ENCODE measurements at regions of chr11 and their contacts with region 1.

Region 1: DNA sequence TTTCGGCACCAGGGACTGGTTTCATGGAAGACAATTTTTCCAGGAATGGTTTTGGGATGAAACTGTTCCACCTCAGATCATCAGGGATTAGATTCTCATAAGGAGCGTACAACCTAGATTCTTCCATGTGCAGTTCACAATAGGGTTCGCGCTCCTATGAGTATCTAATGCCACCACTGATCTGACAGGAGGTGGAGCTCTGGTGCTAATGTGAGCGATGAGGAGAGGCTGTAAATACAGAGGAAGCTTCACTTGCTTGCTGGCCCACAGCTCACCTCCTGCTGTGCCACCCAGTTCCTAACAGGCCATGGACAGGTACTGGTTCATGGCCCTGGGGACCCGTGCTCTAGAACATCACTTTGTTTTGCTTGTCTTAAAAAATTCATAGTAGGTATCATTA is 41.8 kb upstream of the AMPD3 start:
- DNase-seq: peak in 7 of 10 donors; percentile 34 to 68 (median 58)
- H3K4me3 ChIP-seq: no peak overlapping the region
- H3K27ac ChIP-seq: peak overlapping the region in 37 of 59 donors; percentile 3 to 88 (median 66)
- H3K27me3 ChIP-seq: no peaks in the 10 kb centered on the region
- CTCF ChIP-seq: peak in 55 of 56 donors; percentile 18 to 79 (median 55)

Region 2: DNA sequence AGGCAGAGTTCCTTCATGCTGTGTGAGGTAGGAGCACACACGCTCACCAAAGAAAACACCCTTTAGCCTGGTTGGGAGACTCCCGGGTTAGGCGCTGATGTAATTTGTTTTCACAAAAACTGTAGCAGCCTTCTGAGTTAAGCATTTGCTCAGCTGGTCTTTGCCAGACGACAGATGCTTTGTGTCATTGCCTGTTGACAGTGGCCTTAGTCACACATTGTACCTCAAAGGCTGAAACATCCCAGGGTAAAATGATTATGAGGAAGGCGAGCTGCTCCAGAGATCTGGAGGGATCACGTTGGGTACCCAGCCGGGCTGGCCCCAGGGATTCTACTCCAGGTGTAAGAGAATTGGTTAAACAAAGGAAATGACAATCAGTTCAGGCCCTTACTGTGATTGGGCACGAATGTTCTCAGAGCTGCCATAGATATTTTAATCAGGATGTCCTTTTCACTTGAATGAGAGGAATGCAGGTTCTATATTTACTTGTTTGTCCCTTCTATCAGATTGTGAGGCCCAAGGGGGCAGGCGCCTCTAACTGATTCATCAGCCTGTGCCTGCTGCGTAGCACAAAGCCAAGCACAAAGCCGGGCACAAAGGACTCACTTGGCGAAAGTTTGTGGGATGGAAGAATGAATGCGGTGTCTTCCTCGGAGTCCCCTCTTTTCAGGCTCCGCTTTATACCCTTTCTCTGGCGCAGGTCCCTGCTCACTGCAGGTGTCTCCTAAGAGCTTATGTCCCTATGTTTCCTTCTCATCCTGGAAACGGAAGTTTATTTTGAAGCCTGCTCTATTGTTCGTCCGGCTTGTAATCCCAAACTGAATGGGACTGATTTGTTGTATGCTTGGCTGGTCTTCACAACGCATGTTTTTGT is 61.3 kb before region 1 on chr11:
- intact Hi-C with region 1: no loop called
- DNase-seq: peak in 1 of 10 donors; percentile 35
- H3K4me3 ChIP-seq: no peak overlapping the region
- H3K27ac ChIP-seq: peak overlapping the region in 8 of 59 donors; percentile 5 to 63 (median 32)
- H3K27me3 ChIP-seq: peaks cover 0 to 1% (median 0%) of the 10 kb centered on the region in 45 donors
- CTCF ChIP-seq: no peak

Region 3: GRCh38 chr11:10436224-10436623 is 23.0 kb after region 1 on chr11:
- intact Hi-C with region 1: no loop called
- DNase-seq: no peak
- H3K4me3 ChIP-seq: no peak overlapping the region
- H3K27ac ChIP-seq: no peak overlapping the region
- H3K27me3 ChIP-seq: no peaks in the 10 kb centered on the region
- CTCF ChIP-seq: no peak

Region 4: GRCh38 chr11:10450464-10451425 is 37.5 kb after region 1 on chr11:
- intact Hi-C with region 1: loop called in 1 of 2 experiments (anchors 5 kb)
- DNase-seq: peak in 5 of 10 donors; percentile 25 to 68 (median 49)
- H3K4me3 ChIP-seq: peak overlapping the region; percentile 47 to 88 (median 70)
- H3K27ac ChIP-seq: peak overlapping the region; percentile 77 to 100 (median 95)
- H3K27me3 ChIP-seq: no peaks in the 10 kb centered on the region
- CTCF ChIP-seq: peak in 36 of 56 donors; percentile 4 to 56 (median 29)

Region 5: GRCh38 chr11:10502770-10503169 is 89.5 kb after region 1 on chr11:
- intact Hi-C with region 1: loop called in 1 of 2 experiments (anchors 5 kb)
- DNase-seq: no peak
- H3K4me3 ChIP-seq: no peak overlapping the region
- H3K27ac ChIP-seq: peak overlapping the region in 42 of 59 donors; percentile 0 to 77 (median 45)
- H3K27me3 ChIP-seq: no peaks in the 10 kb centered on the region
- CTCF ChIP-seq: no peak

Region 6: GRCh38 chr11:10540923-10541560 is 127.8 kb after region 1 on chr11 and contains the start of gene RNF141:
- intact Hi-C with region 1: loop called (anchors 5 kb)
- DNase-seq: peak; percentile 90 to 97 (median 94)
- H3K4me3 ChIP-seq: peak within 1 kb of the TSS; percentile 63 to 99 (median 91)
- H3K27ac ChIP-seq: peak within 1 kb of the TSS; percentile 51 to 96 (median 91)
- H3K27me3 ChIP-seq: no peaks in the 10 kb centered on the region
- CTCF ChIP-seq: peak; percentile 64 to 95 (median 89)
- total RNA-seq, gene RNF141: 47.2 to 142 (median 77.9) TPM

Region 7: DNA sequence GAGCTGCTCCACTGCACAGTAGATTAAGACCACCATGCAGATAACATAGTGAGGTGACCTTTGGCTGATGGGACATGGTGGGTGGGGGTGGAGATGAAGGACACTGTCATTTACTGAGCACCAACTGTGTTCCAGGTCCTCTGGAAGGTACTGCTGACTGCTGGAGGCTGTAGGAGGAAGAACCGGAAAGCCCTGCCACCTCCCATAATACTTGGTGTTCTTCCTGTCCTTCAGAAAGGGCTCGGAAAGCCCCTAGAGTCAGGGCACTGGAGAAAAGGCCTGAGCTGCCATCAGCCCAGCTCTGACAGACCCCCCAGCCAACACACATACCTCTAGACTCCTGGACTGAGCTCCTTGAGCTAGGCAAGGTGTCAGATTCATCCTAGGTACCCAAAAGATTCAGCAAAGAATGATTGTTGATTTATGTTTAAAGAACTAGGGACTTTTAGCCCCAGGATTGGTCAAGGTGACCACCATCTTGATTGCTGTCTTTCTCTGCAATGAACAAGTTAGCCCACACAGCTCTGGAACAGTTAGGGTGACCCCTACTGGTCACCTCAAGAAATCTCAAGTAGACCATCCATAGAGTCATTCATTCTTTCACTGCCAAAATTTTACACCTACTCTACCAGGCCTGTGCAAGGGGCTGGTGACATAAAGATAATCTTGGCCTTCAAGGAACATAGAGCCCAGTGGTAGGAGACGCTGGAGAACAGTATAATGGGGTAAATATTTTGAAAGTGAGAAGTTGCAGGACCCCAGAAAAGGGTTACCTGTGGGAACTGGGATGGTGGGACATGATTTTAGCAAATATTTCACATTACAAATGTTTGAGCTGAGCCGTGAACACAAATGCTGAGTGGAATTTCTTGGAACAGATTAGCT is 240.9 kb after region 1 on chr11:
- intact Hi-C with region 1: loop called (anchors 2 to 5 kb)
- DNase-seq: no peak
- H3K4me3 ChIP-seq: no peak overlapping the region
- H3K27ac ChIP-seq: peak overlapping the region in 29 of 59 donors; percentile 4 to 71 (median 35)
- H3K27me3 ChIP-seq: no peaks in the 10 kb centered on the region
- CTCF ChIP-seq: peak; percentile 40 to 88 (median 75)

Region 8: DNA sequence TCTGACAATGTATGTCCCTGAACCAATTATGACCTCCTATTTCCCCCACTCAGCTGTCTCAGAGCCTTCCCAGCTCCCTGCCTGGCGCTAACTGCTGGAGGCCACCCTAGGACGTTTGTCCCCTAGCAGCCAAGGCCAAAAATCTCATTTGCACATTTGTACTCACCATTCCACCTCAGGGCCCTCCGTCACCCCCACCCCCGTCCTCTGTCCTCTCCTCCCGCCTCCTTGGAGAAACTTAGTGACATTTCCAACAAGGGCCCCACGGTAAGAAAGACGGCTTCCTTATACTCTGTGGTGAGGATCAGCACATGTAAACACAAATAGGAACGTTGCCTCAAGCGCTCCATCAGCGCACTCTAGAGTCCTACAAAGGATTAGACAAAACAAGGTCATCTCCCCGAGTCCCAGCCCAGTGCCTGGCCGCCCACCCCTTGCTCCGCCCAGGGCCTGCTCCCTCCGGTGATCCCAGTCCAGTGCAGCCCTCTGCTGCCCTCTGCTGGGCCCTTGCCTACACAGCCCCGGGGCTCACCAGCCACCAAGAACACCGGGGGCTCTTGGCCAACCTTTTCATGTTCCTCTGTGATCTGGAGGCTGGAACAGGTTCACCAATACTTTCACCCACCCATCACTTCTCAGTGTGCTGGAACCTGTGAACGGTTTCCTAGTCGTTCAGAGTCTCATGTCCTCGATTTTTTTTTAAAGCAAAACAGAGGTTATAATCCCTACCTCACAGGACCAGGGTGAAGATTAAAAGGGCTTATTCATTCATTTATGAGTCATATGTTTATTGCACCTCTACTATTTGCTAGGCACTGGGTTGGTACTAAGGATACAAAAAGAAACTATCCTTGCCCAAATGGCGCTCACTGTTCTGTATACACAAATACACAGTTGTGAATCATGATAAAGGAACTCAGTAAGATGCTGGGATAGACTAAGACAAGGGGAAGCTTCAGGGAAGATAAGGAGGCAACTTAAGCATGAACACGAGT is 322.5 kb after region 1 on chr11:
- intact Hi-C with region 1: loop called in 1 of 2 experiments (anchors 2 kb)
- DNase-seq: peak; percentile 83 to 93 (median 90)
- H3K4me3 ChIP-seq: peak overlapping the region in 55 of 59 donors; percentile 2 to 60 (median 37)
- H3K27ac ChIP-seq: peak overlapping the region in 49 of 59 donors; percentile 24 to 82 (median 69)
- H3K27me3 ChIP-seq: no peaks in the 10 kb centered on the region
- CTCF ChIP-seq: peak; percentile 92 to 100 (median 99)

Measured in dorsolateral prefrontal cortex (tissue), 120 donors.